Activated CD4-positive, alpha-beta T cell treated with anti-CD3 and anti-CD28 coated beads for 36 hours (primary cell): ENCODE measurements at regions of chr10 and their contacts with region 1.

Region 1: GRCh38 chr10:124741281-124741921 is 2.8 kb downstream of the FAM53B start:
- DNase-seq: peak; percentile 88
- ATAC-seq: peak; percentile 67
- H3K4me3 Mint-ChIP-seq: peak overlapping the region; percentile 65
- H3K27ac Mint-ChIP-seq: peak overlapping the region; percentile 84
- H3K4me1 Mint-ChIP-seq: peaks cover 74% of the 10 kb centered on the region
- H3K27me3 Mint-ChIP-seq: peaks cover 7% of the 10 kb centered on the region

Region 2: GRCh38 chr10:124530215-124530665 is 211.2 kb before region 1 on chr10:
- CTCF ChIA-PET with region 1: interaction called, 54 read pairs
- POLR2A ChIA-PET with region 1: no interaction called
- intact Hi-C with region 1: loop called in 1 of 2 experiments (anchors 1 kb)
- DNase-seq: peak; percentile 92
- ATAC-seq: peak; percentile 97
- H3K4me3 Mint-ChIP-seq: no peak overlapping the region
- H3K27ac Mint-ChIP-seq: no peak overlapping the region
- H3K4me1 Mint-ChIP-seq: peaks cover 4% of the 10 kb centered on the region
- H3K27me3 Mint-ChIP-seq: no peaks in the 10 kb centered on the region

Region 3: GRCh38 chr10:124632064-124632531 is 109.3 kb before region 1 on chr10:
- CTCF ChIA-PET with region 1: interaction called, 13 read pairs
- POLR2A ChIA-PET with region 1: no interaction called
- intact Hi-C with region 1: loop called (anchors 1 kb)
- DNase-seq: peak; percentile 71
- ATAC-seq: peak; percentile 59
- H3K4me3 Mint-ChIP-seq: no peak overlapping the region
- H3K27ac Mint-ChIP-seq: no peak overlapping the region
- H3K4me1 Mint-ChIP-seq: peaks cover 45% of the 10 kb centered on the region
- H3K27me3 Mint-ChIP-seq: no peaks in the 10 kb centered on the region

Region 4: GRCh38 chr10:124671486-124672075 is 69.8 kb before region 1 on chr10:
- CTCF ChIA-PET with region 1: interaction called, 14 read pairs
- POLR2A ChIA-PET with region 1: no interaction called
- intact Hi-C with region 1: no loop called
- DNase-seq: peak; percentile 50
- ATAC-seq: peak; percentile 71
- H3K4me3 Mint-ChIP-seq: no peak overlapping the region
- H3K27ac Mint-ChIP-seq: peak overlapping the region; percentile 55
- H3K4me1 Mint-ChIP-seq: peaks cover 66% of the 10 kb centered on the region
- H3K27me3 Mint-ChIP-seq: no peaks in the 10 kb centered on the region

Region 5: GRCh38 chr10:124703778-124704427 is 37.5 kb before region 1 on chr10:
- CTCF ChIA-PET with region 1: interaction called, 36 read pairs
- POLR2A ChIA-PET with region 1: interaction called, 6 read pairs
- intact Hi-C with region 1: loop called in 1 of 2 experiments (anchors 5 kb)
- DNase-seq: no peak
- ATAC-seq: no peak
- H3K4me3 Mint-ChIP-seq: no peak overlapping the region
- H3K27ac Mint-ChIP-seq: peak overlapping the region; percentile 75
- H3K4me1 Mint-ChIP-seq: peaks cover 93% of the 10 kb centered on the region
- H3K27me3 Mint-ChIP-seq: no peaks in the 10 kb centered on the region

Region 6: DNA sequence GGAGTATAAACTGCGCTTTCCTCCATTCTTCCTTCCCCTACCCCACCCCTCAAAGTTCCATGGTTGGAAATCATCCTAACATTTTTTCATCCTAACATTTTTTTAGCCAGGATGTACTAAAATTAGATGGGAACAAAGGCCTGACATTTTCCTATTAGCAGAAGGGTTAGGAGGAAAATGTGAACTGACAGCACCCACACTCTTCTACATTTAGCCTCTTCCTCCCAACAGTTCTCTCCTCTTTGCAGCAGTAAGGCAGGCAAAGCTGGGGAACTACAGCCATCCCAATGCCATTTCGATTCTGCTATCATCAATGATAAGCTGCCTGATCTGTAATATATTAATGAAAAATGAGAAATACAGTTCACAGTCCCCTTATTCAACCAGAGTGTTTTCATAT is 14.2 kb after region 1 on chr10:
- CTCF ChIA-PET with region 1: interaction called, 39 read pairs
- POLR2A ChIA-PET with region 1: interaction called, 3 read pairs
- intact Hi-C with region 1: no loop called
- DNase-seq: no peak
- ATAC-seq: no peak
- H3K4me3 Mint-ChIP-seq: no peak overlapping the region
- H3K27ac Mint-ChIP-seq: no peak overlapping the region
- H3K4me1 Mint-ChIP-seq: peaks cover 2% of the 10 kb centered on the region
- H3K27me3 Mint-ChIP-seq: no peaks in the 10 kb centered on the region

Region 7: GRCh38 chr10:124916585-124917427 is 175.4 kb after region 1 on chr10:
- CTCF ChIA-PET with region 1: no interaction called
- POLR2A ChIA-PET with region 1: no interaction called
- intact Hi-C with region 1: loop called (anchors 1 to 10 kb)
- DNase-seq: peak; percentile 99
- ATAC-seq: peak; percentile 95
- H3K4me3 Mint-ChIP-seq: peak overlapping the region; percentile 92
- H3K27ac Mint-ChIP-seq: peak overlapping the region; percentile 92
- H3K4me1 Mint-ChIP-seq: peaks cover 38% of the 10 kb centered on the region
- H3K27me3 Mint-ChIP-seq: no peaks in the 10 kb centered on the region